ENCODE measurements at regions of chr6 and their contacts with region 1.

Region 1: GRCh38 chr6:36094753-36095496 is 35.4 kb upstream of the MAPK13 start:
- DNase-seq: peak; percentile 68 to 84 (median 74)
- H3K4me3 ChIP-seq: no peak overlapping the region
- H3K4me3 Mint-ChIP-seq: peak overlapping the region in 1 of 7 donors; percentile 15
- H3K27ac ChIP-seq: no peak overlapping the region
- H3K27ac Mint-ChIP-seq: peak overlapping the region; percentile 41 to 90 (median 70)
- H3K4me1 ChIP-seq: peaks cover 27% of the 10 kb centered on the region
- H3K4me1 Mint-ChIP-seq: peaks cover 34 to 47% (median 34%) of the 10 kb centered on the region in 3 donors
- H3K27me3 ChIP-seq: no peaks in the 10 kb centered on the region
- H3K27me3 Mint-ChIP-seq: no peaks in the 10 kb centered on the region

Region 2: GRCh38 chr6:36083446-36083845 is 11.5 kb before region 1 on chr6:
- CTCF ChIA-PET with region 1: interaction called, 26 read pairs
- POLR2A ChIA-PET with region 1: no interaction called
- DNase-seq: no peak
- H3K4me3 ChIP-seq: no peak overlapping the region
- H3K4me3 Mint-ChIP-seq: no peak overlapping the region
- H3K27ac ChIP-seq: no peak overlapping the region
- H3K27ac Mint-ChIP-seq: peak overlapping the region in 1 of 8 donors; percentile 26
- H3K4me1 ChIP-seq: no peaks in the 10 kb centered on the region
- H3K4me1 Mint-ChIP-seq: peaks cover 12 to 19% (median 14%) of the 10 kb centered on the region in 3 donors
- H3K27me3 ChIP-seq: no peaks in the 10 kb centered on the region
- H3K27me3 Mint-ChIP-seq: no peaks in the 10 kb centered on the region

Region 3: GRCh38 chr6:36123257-36124139 is 28.6 kb after region 1 on chr6:
- CTCF ChIA-PET with region 1: interaction called, 33 read pairs
- POLR2A ChIA-PET with region 1: interaction called, 10 read pairs
- DNase-seq: peak; percentile 85 to 93 (median 90)
- H3K4me3 ChIP-seq: peak overlapping the region; percentile 20
- H3K4me3 Mint-ChIP-seq: peak overlapping the region; percentile 50 to 78 (median 57)
- H3K27ac ChIP-seq: peak overlapping the region; percentile 32
- H3K27ac Mint-ChIP-seq: peak overlapping the region; percentile 84 to 99 (median 96)
- H3K4me1 ChIP-seq: peaks cover 78% of the 10 kb centered on the region
- H3K4me1 Mint-ChIP-seq: peaks cover 84 to 96% (median 87%) of the 10 kb centered on the region in 3 donors
- H3K27me3 ChIP-seq: no peaks in the 10 kb centered on the region
- H3K27me3 Mint-ChIP-seq: no peaks in the 10 kb centered on the region

Region 4: GRCh38 chr6:36131511-36132245 is 36.8 kb after region 1 on chr6:
- CTCF ChIA-PET with region 1: interaction called, 13 read pairs
- POLR2A ChIA-PET with region 1: interaction called, 3 read pairs
- DNase-seq: peak; percentile 34 to 63 (median 43)
- H3K4me3 ChIP-seq: peak overlapping the region; percentile 86
- H3K4me3 Mint-ChIP-seq: peak overlapping the region; percentile 88 to 96 (median 89)
- H3K27ac ChIP-seq: peak overlapping the region; percentile 49
- H3K27ac Mint-ChIP-seq: peak overlapping the region; percentile 90 to 96 (median 93)
- H3K4me1 ChIP-seq: peaks cover 40% of the 10 kb centered on the region
- H3K4me1 Mint-ChIP-seq: peaks cover 44 to 59% (median 57%) of the 10 kb centered on the region in 3 donors
- H3K27me3 ChIP-seq: no peaks in the 10 kb centered on the region
- H3K27me3 Mint-ChIP-seq: no peaks in the 10 kb centered on the region

Region 5: GRCh38 chr6:36196880-36197548 is 102.1 kb after region 1 on chr6:
- CTCF ChIA-PET with region 1: interaction called, 16 read pairs
- POLR2A ChIA-PET with region 1: no interaction called
- DNase-seq: peak; percentile 97 to 100 (median 99)
- H3K4me3 ChIP-seq: peak overlapping the region; percentile 89
- H3K4me3 Mint-ChIP-seq: peak overlapping the region; percentile 88 to 98 (median 93)
- H3K27ac ChIP-seq: peak overlapping the region; percentile 71
- H3K27ac Mint-ChIP-seq: peak overlapping the region; percentile 89 to 99 (median 91)
- H3K4me1 ChIP-seq: peaks cover 36% of the 10 kb centered on the region
- H3K4me1 Mint-ChIP-seq: peaks cover 42 to 61% (median 54%) of the 10 kb centered on the region in 3 donors
- H3K27me3 ChIP-seq: no peaks in the 10 kb centered on the region
- H3K27me3 Mint-ChIP-seq: no peaks in the 10 kb centered on the region